ENCODE measurements at regions of chr16 and their contacts with region 1.

Region 1: DNA sequence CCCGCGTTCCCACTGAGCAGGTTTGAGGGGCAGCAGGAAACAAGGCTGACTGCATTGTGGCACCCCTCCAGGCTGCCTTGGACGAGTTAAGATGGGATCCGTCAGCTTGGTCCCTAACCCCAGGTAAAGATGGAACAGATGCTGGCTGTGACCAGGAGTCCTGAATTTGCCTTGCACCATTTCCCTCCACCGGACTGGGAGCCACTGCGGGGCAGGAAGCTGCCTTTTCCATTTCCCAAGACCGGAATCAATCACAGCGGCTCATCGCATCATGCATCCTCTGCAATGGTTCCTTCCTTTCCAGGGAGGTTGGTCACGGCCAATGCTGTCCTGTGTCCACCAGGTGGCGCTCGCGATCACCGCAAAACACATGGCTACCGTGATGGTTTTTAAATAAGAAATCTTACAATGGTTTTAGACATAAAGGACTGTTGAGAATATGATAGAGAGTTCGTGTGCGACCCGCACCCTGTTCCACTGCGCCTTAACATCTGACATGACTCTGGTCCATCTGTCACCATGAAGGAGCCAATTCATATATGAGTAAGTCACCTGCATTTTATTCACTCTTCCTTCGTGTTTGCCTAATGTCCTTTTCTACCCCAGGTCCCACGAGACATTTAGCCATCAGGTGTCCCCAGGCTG is 6.8 kb upstream of the MEAK7 start:
- DNase-seq: peak; percentile 85 to 88
- H3K4me3 ChIP-seq: no peak overlapping the region
- H3K27ac ChIP-seq: no peak overlapping the region
- H3K4me1 ChIP-seq: no peaks in the 10 kb centered on the region
- H3K27me3 ChIP-seq: no peaks in the 10 kb centered on the region
- CTCF ChIP-seq: peak; percentile 93 to 97 (median 95)
- POLR2A ChIP-seq: no peak

Region 2: DNA sequence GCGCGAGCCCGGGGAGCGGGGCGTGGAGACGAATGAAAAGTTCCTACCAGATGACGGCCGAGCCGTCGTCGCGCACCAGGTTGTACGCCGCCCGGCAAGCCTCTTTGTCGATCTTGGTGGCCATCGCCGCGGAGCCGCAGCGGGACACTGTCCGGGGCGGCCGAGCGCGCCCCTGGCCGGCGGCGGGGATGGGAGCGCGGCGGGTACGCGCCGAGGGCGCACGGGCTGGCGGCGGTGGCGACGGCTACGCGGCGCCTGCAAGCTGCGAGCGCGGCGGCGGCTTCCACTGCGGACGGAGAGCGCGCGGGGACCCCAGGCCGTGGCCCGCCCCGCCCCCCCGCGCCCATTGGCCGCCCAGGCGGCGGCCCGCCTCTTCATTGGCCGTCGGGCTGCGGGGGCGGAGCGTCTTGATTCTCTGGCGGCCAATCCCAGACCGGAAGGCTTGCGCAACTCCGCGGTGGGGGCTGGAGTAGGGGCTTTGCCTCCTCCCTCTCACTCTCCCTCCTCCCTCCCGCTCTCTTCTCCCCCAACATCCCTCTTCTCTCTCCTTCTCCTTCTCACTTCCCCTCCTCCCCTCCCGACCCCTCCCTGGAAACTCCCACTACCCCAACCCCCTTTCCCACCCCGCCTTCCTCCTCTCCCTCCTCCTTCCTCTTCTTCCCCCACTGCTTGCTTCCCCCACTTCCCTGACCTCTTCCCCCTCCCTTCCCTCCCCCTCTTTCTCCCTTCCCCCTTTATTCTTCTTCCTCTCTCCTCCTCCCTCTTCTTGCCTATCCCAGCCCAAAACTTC is 106.7 kb after region 1 on chr16 and contains the start of gene COTL1:
- intact Hi-C with region 1: loop called (anchors 5 kb)
- DNase-seq: peak; percentile 98
- H3K4me3 ChIP-seq: peak within 1 kb of the TSS; percentile 50 to 77
- H3K27ac ChIP-seq: peak within 1 kb of the TSS; percentile 68 to 88
- H3K4me1 ChIP-seq: no peaks in the 10 kb centered on the region
- H3K27me3 ChIP-seq: no peaks in the 10 kb centered on the region
- CTCF ChIP-seq: peak in 1 of 4 experiments; percentile 38
- POLR2A ChIP-seq: peak; percentile 94 to 97
- total RNA-seq, gene COTL1: 19.1 to 66.9 (median 29.4) TPM

Region 3: DNA sequence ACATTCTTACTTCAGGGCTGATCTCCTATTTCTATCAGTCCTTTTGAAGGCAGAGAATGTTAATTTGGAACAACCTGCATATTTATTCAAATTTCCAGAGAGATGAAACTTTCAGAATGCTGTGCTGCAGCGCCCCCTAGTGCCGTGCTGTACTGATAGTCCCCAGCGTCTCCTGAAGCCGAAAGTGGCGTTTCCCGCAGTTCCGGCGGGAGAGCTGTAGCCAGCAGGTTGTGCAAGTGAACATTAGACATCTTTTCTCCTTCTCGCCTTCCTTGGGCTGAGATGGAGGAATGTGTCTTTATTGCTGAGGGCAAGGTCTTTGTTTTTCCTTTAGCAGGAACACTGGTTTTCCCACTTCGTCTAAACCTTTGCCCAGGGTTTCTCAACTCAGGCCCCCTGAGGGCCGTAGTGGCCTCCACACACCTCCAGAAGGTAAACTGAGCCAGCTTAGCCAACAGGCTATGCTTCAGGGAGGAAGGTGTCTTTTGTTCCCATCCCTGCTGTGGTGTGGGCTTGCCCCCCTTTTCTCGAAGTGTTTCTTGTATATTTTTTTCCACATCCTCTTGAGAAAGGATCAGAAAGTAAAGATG is 214.9 kb after region 1 on chr16:
- intact Hi-C with region 1: loop called (anchors 10 kb)
- DNase-seq: peak; percentile 93 to 94
- H3K4me3 ChIP-seq: no peak overlapping the region
- H3K27ac ChIP-seq: peak overlapping the region; percentile 40 to 49
- H3K4me1 ChIP-seq: peaks cover 6 to 9% of the 10 kb centered on the region in 2 donors
- H3K27me3 ChIP-seq: no peaks in the 10 kb centered on the region
- CTCF ChIP-seq: peak; percentile 91 to 95 (median 93)
- POLR2A ChIP-seq: no peak

Measured in uterus (tissue), 4 donors.